PC-9 (cell line): ENCODE measurements at regions of chr7 and their contacts with region 1.

Region 1: GRCh38 chr7:54904130-54904529 is 114.7 kb upstream of the EGFR start:
- DNase-seq: no peak
- H3K4me3 ChIP-seq: no peak overlapping the region
- H3K27ac ChIP-seq: no peak overlapping the region
- H3K4me1 ChIP-seq: no peaks in the 10 kb centered on the region
- H3K27me3 ChIP-seq: no peaks in the 10 kb centered on the region
- CTCF ChIP-seq: no peak

Region 2: GRCh38 chr7:54813398-54813797 is 90.7 kb before region 1 on chr7:
- CTCF ChIA-PET with region 1: no interaction called
- POLR2A ChIA-PET with region 1: interaction called, 11 read pairs
- intact Hi-C with region 1: no loop called
- DNase-seq: no peak
- H3K4me3 ChIP-seq: no peak overlapping the region
- H3K27ac ChIP-seq: no peak overlapping the region
- H3K4me1 ChIP-seq: peaks cover 12% of the 10 kb centered on the region; the same call in 1 of the 2 replicates
- H3K27me3 ChIP-seq: no peaks in the 10 kb centered on the region
- CTCF ChIP-seq: no peak

Region 3: GRCh38 chr7:54846273-54846672 is 57.9 kb before region 1 on chr7:
- CTCF ChIA-PET with region 1: no interaction called
- POLR2A ChIA-PET with region 1: no interaction called
- intact Hi-C with region 1: loop called (anchors 5 kb)
- DNase-seq: no peak
- H3K4me3 ChIP-seq: no peak overlapping the region
- H3K27ac ChIP-seq: no peak overlapping the region
- H3K4me1 ChIP-seq: peaks cover 15% of the 10 kb centered on the region; the same call in 1 of the 2 replicates
- H3K27me3 ChIP-seq: no peaks in the 10 kb centered on the region
- CTCF ChIP-seq: no peak

Region 4: DNA sequence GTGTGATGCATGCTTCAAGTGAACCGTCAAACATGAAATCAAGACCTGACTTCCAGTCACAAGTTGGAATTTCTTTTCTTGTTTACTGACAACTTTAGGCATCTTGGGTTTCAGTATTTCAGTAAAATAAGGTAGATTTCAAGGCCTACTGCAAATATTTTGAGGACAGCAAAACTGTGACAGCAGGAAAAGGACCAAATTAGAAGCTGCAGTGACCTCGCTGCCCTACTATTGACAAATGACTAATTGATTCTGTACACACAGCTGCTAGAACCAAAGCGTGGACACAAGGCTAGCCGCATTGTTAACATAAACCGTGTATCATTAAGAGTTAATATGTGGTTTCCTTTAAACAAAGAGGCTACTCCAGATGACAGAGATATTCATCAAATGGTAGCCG is 39.5 kb before region 1 on chr7:
- CTCF ChIA-PET with region 1: no interaction called
- POLR2A ChIA-PET with region 1: interaction called, 21 read pairs
- intact Hi-C with region 1: no loop called
- DNase-seq: no peak
- H3K4me3 ChIP-seq: no peak overlapping the region
- H3K27ac ChIP-seq: no peak overlapping the region
- H3K4me1 ChIP-seq: peaks cover 6% of the 10 kb centered on the region; the same call in 1 of the 2 replicates
- H3K27me3 ChIP-seq: no peaks in the 10 kb centered on the region
- CTCF ChIP-seq: no peak

Region 5: GRCh38 chr7:54921116-54921515 is 17.0 kb after region 1 on chr7:
- CTCF ChIA-PET with region 1: no interaction called
- POLR2A ChIA-PET with region 1: no interaction called
- intact Hi-C with region 1: loop called (anchors 2 kb)
- DNase-seq: no peak
- H3K4me3 ChIP-seq: no peak overlapping the region
- H3K27ac ChIP-seq: no peak overlapping the region
- H3K4me1 ChIP-seq: peaks cover 10% of the 10 kb centered on the region
- H3K27me3 ChIP-seq: no peaks in the 10 kb centered on the region
- CTCF ChIP-seq: no peak